ENCODE measurements at regions of chr3 and their contacts with region 1.

Region 1: DNA sequence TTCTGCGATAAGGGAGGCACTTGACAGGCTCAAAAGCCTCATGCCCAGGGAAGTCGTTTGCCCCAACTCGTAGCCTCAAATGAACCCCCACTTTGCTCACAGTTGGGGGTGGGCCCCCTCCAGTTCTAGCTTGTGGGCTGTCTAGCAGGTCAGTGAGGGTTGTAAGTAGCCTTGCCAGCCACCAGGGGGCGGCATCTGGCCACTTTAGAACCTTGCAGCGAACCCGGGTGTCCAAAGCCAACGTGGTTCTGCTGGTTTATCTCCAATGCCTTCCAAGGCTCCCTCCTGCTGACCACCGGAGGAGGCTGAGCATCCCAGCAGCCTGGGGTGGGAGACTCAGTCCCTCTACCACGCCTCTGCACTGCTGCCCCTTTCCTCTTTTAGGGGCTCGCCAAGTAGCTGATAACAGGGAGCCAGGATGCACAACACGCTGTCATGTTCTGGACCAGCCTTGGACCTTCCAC is 9.2 kb upstream of the RBSN start:
- DNase-seq: peak; percentile 80 to 87 (median 85)
- H3K4me3 ChIP-seq: peak overlapping the region in 4 of 7 experiments; percentile 25 to 57 (median 30)
- H3K27ac ChIP-seq: no peak overlapping the region
- H3K4me1 ChIP-seq: peaks cover 0 to 5% (median 4%) of the 10 kb centered on the region in 4 experiments
- H3K27me3 ChIP-seq: no peaks in the 10 kb centered on the region

Region 2: GRCh38 chr3:14947886-14948555 is 160.1 kb before region 1 on chr3:
- CTCF ChIA-PET with region 1: no interaction called
- POLR2A ChIA-PET with region 1: no interaction called
- DNase-seq: peak; percentile 95 to 98 (median 98)
- H3K4me3 ChIP-seq: peak overlapping the region; percentile 74 to 94 (median 86)
- H3K27ac ChIP-seq: peak overlapping the region; percentile 95 to 98
- H3K4me1 ChIP-seq: peaks cover 27 to 46% (median 33%) of the 10 kb centered on the region in 4 experiments
- H3K27me3 ChIP-seq: no peaks in the 10 kb centered on the region

Region 3: DNA sequence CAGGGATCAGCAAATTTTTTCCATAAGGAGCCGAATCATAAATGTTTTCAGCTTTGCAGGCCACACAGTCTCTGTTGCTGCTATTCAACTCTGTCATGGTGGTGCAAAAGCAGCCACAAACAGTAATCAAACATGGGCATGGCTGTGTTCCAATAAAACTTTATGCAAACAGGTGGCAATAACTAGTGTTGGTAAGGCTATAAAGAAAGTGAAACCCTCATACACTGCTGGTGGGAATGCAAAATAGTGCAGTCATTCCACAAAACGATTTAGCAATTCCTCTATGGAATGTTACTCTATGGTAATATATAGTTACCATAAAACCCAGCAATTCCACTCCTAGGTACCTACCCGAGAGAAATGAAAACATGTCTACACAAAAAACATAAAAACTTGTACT is 29.0 kb before region 1 on chr3:
- CTCF ChIA-PET with region 1: no interaction called
- POLR2A ChIA-PET with region 1: no interaction called
- DNase-seq: no peak
- H3K4me3 ChIP-seq: no peak overlapping the region
- H3K27ac ChIP-seq: no peak overlapping the region
- H3K4me1 ChIP-seq: no peaks in the 10 kb centered on the region
- H3K27me3 ChIP-seq: no peaks in the 10 kb centered on the region

Region 4: GRCh38 chr3:15120986-15121385 is 12.9 kb after region 1 on chr3:
- CTCF ChIA-PET with region 1: interaction called, 93 read pairs
- POLR2A ChIA-PET with region 1: interaction called, 3 read pairs
- DNase-seq: no peak
- H3K4me3 ChIP-seq: no peak overlapping the region
- H3K27ac ChIP-seq: no peak overlapping the region
- H3K4me1 ChIP-seq: peaks cover 0 to 2% (median 0%) of the 10 kb centered on the region in 4 experiments
- H3K27me3 ChIP-seq: peaks cover 0 to 2% (median 0%) of the 10 kb centered on the region in 5 experiments

Region 5: DNA sequence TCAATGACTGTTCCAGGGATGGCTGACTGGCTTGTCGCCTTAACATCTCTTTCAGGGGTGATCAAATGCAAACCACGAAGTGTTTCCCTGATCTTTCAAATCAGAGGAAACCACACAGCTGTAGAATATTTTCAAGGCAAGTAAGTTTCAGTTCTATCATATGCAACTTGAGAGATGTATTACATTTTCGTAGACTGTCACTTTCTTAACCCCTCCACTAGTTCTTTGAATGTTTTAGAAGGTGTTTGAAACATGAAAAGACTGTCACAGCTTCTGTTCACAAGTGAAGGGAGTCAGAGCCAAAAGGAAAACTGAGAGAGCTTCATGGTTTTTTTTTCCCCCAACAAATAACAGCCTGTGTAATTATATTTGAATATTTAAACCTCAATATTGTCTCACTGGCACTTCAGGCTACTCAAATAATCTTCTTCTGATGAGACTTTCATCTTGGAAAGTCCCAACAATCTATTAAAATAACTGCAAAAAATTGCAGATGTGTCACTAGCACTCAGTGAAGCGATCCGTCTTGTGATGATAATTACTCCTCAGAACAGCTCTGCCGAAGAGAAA is 72.0 kb after region 1 on chr3:
- CTCF ChIA-PET with region 1: interaction called, 3 read pairs
- POLR2A ChIA-PET with region 1: interaction called, 10 read pairs
- DNase-seq: no peak
- H3K4me3 ChIP-seq: no peak overlapping the region
- H3K27ac ChIP-seq: no peak overlapping the region
- H3K4me1 ChIP-seq: peaks cover 0 to 3% (median 0%) of the 10 kb centered on the region in 4 experiments
- H3K27me3 ChIP-seq: peaks cover 0 to 22% (median 11%) of the 10 kb centered on the region in 5 experiments

Region 6: DNA sequence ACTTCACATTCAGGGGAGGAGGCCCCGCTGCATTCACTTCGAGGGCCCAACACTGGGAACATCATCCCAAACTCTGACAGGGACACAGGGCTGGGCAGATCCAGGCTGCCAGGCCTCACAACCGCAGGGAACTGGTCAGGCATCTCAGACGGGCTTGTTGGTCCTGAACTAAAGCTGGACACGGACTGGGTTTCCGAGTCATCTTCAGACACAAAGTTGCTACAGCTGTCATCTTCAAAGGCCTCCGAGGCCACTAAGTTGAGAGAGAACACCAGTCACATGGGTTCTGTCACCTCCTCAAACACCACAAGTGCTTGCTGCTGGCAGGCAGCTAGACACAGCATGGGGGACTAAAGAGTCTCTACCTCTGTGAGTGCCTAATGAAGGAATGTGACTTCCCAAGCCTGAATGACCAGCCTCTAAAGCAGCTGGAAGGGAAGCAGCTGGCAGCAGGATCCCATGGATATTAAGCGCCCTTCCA is 148.8 kb after region 1 on chr3:
- CTCF ChIA-PET with region 1: no interaction called
- POLR2A ChIA-PET with region 1: no interaction called
- DNase-seq: no peak
- H3K4me3 ChIP-seq: no peak overlapping the region
- H3K27ac ChIP-seq: no peak overlapping the region
- H3K4me1 ChIP-seq: no peaks in the 10 kb centered on the region
- H3K27me3 ChIP-seq: no peaks in the 10 kb centered on the region

Measured in common myeloid progenitor, CD34-positive (primary cell).